A673 (cell line): ENCODE measurements at regions of chr1 and their contacts with region 1.

Region 1: GRCh38 chr1:31127266-31127665 is 61.7 kb upstream of the PUM1 start:
- DNase-seq: no peak
- H3K4me3 ChIP-seq: no peak overlapping the region
- H3K27ac ChIP-seq: no peak overlapping the region
- H3K4me1 ChIP-seq: no peaks in the 10 kb centered on the region
- H3K27me3 ChIP-seq: no peaks in the 10 kb centered on the region
- CTCF ChIP-seq: no peak

Region 2: DNA sequence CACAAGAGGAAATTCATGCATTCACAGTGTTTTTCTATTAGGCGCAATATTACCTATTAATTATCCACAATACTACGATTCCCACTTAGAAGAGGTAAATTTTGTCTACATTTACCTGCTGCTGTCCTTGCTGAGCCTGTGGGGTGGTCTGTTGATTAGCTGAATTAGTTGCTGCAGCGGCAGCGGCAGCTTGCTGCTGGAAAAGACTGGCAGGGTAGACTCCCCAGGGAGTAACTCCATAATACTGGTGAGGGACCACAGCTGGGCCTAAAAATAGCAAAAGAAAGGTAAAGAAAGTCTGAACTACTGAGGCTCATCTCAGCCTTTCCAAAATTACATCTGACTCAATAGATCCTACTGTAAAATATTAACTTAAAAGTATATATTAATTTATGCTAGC is 152.7 kb before region 1 on chr1:
- CTCF ChIA-PET with region 1: interaction called, 21 read pairs
- POLR2A ChIA-PET with region 1: no interaction called
- intact Hi-C with region 1: no loop called
- DNase-seq: peak; percentile 21
- H3K4me3 ChIP-seq: no peak overlapping the region
- H3K27ac ChIP-seq: no peak overlapping the region
- H3K4me1 ChIP-seq: peaks cover 27% of the 10 kb centered on the region
- H3K27me3 ChIP-seq: no peaks in the 10 kb centered on the region
- CTCF ChIP-seq: no peak

Region 3: DNA sequence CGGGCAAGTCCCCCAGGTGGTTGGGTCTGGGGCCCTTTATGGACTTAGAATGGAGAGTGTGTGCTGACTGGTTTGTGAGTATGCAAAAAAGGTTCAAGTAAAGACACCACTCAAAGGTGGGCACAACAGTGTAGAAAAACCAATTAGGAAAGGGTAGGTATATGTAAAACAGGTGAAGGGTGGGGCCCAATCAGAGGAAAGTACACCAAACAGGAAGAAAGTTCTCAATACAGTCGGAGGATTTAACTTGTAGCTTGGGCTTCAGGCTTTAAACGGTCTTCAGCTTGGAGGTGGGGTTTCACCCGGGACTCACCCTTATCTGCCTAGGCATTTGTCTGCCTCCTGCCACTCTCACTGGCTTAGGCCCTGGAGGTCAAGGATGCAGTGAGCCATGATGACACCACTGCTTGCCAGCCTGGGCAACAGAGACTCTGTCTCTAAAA is 54.9 kb before region 1 on chr1:
- CTCF ChIA-PET with region 1: no interaction called
- POLR2A ChIA-PET with region 1: interaction called, 13 read pairs
- intact Hi-C with region 1: no loop called
- DNase-seq: no peak
- H3K4me3 ChIP-seq: no peak overlapping the region
- H3K27ac ChIP-seq: no peak overlapping the region
- H3K4me1 ChIP-seq: no peaks in the 10 kb centered on the region
- H3K27me3 ChIP-seq: no peaks in the 10 kb centered on the region
- CTCF ChIP-seq: no peak

Region 4: GRCh38 chr1:31306278-31306677 is 179.0 kb after region 1 on chr1:
- CTCF ChIA-PET with region 1: no interaction called
- POLR2A ChIA-PET with region 1: no interaction called
- intact Hi-C with region 1: no loop called
- DNase-seq: peak; percentile 27
- H3K4me3 ChIP-seq: no peak overlapping the region
- H3K27ac ChIP-seq: no peak overlapping the region
- H3K4me1 ChIP-seq: no peaks in the 10 kb centered on the region
- H3K27me3 ChIP-seq: no peaks in the 10 kb centered on the region
- CTCF ChIP-seq: no peak